Tibial artery (tissue), 4 donors: ENCODE measurements at regions of chr9 and their contacts with region 1.

Region 1: DNA sequence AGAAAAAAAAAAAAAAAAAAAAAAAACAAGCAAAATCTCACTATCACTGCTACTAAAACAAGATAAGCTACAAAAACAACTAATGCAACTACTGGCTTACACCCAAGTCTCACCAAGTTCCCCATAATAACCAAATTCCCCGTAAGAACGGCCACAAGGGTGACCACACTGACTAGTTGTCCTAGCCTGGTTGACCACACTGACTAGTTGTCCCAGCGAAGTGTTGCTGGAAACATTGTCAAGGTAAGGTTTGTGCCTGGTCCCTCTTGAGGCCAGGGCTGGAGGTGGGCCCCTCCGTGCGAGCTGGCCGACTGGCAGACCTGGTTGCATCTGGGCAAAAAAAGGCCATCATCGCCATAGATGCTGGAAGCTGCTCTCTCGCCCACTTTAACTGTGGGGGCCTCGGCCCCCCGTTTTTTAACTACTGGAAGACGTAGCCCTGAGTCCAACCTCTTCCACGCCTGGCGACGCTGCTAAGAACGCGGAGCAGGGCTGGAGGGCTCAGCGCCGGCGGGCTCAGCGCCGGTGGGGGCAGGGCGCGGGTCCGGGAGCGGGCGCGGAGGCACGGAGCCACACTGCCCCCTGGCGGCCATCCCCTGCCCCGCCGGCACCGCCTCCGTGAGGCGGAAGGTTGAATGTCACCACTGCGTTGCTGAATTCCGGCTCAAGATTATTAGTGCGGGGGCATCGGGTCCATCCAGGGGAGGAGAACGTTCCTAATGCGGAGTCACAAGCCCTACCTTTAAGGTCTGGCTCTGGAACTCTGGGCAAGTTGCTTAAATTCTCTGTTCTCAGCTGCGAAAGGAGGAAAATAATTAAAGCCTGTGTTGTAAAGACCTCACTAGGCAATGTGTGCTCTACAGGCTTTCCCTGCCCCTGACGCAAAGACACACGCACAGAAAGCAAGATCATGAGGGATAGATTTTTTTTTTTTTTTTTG is 84.0 kb downstream of the HSD17B3 start:
- DNase-seq: peak; percentile 64 to 85
- H3K4me3 ChIP-seq: peak overlapping the region; percentile 41 to 53
- H3K27ac ChIP-seq: peak overlapping the region; percentile 53 to 64
- H3K4me1 ChIP-seq: peaks cover 0 to 24% (median 18%) of the 10 kb centered on the region in 4 donors
- H3K27me3 ChIP-seq: peaks cover 0 to 7% of the 10 kb centered on the region in 2 donors
- CTCF ChIP-seq: peak; percentile 98 to 99

Region 2: GRCh38 chr9:95875305-95876137 is 342.5 kb before region 1 on chr9 and contains the start of gene ERCC6L2:
- intact Hi-C with region 1: loop called (anchors 10 kb)
- DNase-seq: peak; percentile 95 to 97
- H3K4me3 ChIP-seq: no peak within 1 kb of the TSS
- H3K27ac ChIP-seq: no peak within 1 kb of the TSS
- H3K4me1 ChIP-seq: peaks cover 0 to 22% (median 10%) of the 10 kb centered on the region in 4 donors
- H3K27me3 ChIP-seq: no peaks in the 10 kb centered on the region
- CTCF ChIP-seq: no peak

Region 3: GRCh38 chr9:96661711-96662110 is 443.7 kb after region 1 on chr9:
- intact Hi-C with region 1: loop called (anchors 10 kb)
- DNase-seq: no peak
- H3K4me3 ChIP-seq: no peak overlapping the region
- H3K27ac ChIP-seq: no peak overlapping the region
- H3K4me1 ChIP-seq: no peaks in the 10 kb centered on the region
- H3K27me3 ChIP-seq: no peaks in the 10 kb centered on the region
- CTCF ChIP-seq: no peak